ENCODE measurements at regions of chr1 and their contacts with region 1.

Region 1: GRCh38 chr1:205449750-205450443 is 5.9 kb downstream of the BLACAT1 start:
- DNase-seq: peak; percentile 89 to 97 (median 95)
- ATAC-seq: peak; percentile 87
- H3K4me3 ChIP-seq: peak overlapping the region; percentile 38
- H3K27ac ChIP-seq: peak overlapping the region; percentile 61
- H3K4me1 ChIP-seq: peaks cover 37 to 39% of the 10 kb centered on the region in 2 experiments; a peak in 4 of 5 replicates
- H3K27me3 ChIP-seq: peaks cover 3 to 17% of the 10 kb centered on the region in 2 experiments; a peak in 4 of 5 replicates
- CTCF ChIP-seq: no peak; a peak in 1 of 6 replicates
- EP300 ChIP-seq: no peak
- POLR2A ChIP-seq: peak; percentile 55
- RAD21 ChIP-seq: no peak

Region 2: DNA sequence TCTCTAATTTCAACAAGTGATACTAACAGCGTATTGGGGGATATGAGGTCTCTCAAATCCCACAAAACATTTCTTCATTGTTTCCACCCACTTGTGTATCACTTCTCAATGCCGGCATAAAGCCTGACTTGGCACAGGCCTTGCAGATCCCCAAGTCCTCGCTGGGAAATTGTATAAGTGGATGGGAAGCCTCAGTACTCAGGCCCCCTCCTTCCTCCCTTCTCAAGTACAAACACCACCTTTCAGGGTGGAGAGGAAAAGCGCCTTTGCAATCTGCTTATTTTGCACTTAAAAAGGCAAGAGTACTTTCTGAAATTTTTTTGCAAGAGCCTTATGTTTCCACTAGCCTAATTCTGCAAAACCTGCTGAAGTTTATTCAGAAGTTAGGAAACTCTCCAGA is 67.3 kb before region 1 on chr1:
- CTCF ChIA-PET with region 1: interaction called, 10 read pairs
- POLR2A ChIA-PET with region 1: interaction called, 3 read pairs
- in situ Hi-C with region 1: no loop called
- intact Hi-C with region 1: no loop called
- DNase-seq: no peak
- ATAC-seq: no peak
- H3K4me3 ChIP-seq: no peak overlapping the region
- H3K27ac ChIP-seq: no peak overlapping the region
- H3K4me1 ChIP-seq: no peaks in the 10 kb centered on the region
- H3K27me3 ChIP-seq: peaks cover 45 to 64% of the 10 kb centered on the region in 2 experiments
- CTCF ChIP-seq: no peak
- EP300 ChIP-seq: no peak
- POLR2A ChIP-seq: no peak
- RAD21 ChIP-seq: no peak

Region 3: DNA sequence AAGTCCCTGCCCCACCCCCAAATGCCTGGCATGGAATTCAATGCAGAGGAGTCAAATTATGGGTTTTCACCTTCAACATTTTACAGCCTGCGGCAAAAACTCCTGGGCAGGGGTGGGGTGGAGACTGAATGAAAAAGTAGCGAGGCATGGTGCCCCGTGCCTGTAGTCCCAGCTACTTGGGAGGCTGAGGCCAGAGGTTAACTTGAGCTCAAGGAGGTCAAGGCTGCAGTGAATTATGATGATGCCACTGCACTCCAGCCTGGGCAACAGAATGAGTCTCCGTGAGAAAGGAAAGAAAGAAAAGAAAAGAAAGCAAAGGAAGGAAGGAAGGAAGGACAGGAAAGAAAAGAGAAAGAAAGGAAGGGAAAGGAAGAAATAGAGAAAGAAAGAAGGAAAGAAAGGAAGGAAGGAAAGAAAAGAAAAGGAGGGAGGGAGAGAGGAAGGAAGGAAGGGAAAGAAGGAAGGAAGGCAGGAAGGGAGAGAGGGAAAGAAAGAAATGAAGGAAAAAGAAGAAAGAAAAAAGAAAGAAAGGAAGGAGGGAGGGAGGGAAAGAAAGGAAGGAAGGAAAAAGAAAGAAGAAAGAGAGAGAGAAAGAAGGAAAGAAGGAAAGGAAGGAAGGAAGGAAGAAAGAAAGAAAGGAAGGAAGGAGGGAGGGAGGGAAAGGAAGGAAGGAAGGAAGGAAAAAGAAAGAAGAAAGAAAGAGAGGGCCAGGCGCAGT is 39.2 kb before region 1 on chr1:
- CTCF ChIA-PET with region 1: no interaction called
- POLR2A ChIA-PET with region 1: no interaction called
- in situ Hi-C with region 1: no loop called
- intact Hi-C with region 1: no loop called
- DNase-seq: no peak
- ATAC-seq: no peak
- H3K4me3 ChIP-seq: no peak overlapping the region
- H3K27ac ChIP-seq: no peak overlapping the region
- H3K4me1 ChIP-seq: peaks cover 0 to 3% of the 10 kb centered on the region in 2 experiments; a peak in 1 of 5 replicates
- H3K27me3 ChIP-seq: peaks cover 7 to 23% of the 10 kb centered on the region in 2 experiments; a peak in 4 of 5 replicates
- CTCF ChIP-seq: no peak
- EP300 ChIP-seq: no peak
- POLR2A ChIP-seq: no peak
- RAD21 ChIP-seq: no peak

Region 4: DNA sequence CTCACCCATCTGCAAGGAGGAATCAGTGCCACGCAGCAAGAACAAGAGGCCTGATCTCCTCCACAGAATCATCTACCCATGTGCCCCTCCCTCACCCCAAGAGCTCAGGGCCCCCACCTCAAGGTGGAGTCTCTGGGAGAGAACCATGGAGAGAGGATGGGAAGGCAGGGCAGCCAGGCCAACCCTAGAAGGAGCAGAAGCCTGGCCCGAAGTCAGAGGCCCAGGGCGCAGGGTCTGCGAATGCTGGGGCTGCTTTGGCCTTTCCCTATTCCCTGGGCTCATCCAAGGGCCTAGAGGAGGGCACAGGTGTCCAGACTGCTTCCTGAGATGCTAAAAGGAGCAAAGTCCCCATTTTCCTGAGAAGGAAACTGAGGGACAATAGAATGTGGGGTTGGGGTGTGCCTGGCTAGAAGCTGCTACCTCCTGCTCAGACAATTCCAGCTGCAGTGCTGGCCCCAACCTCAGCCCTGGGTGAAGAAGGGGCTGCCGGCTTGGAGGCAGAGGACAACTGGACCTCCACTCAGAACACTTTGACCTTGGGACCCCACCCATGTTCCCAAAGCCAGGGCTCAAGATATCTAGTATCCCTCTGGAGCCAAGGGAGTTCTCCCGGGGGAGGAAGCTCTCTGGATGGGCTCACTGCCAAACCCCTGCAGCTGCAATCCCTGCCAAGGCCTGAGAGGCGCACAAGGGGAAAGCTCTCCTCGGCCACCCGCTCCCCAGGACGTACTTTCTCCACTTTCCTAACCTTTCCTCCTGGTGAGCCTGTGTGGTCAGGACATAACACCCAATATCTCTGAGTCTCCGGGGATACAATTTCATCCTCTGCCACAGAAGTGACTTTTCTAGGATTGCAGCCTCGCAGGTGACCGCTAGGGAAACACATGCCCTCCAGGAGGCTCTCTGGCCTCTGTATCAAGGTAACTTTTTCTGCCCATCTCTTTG is 11.4 kb before region 1 on chr1:
- CTCF ChIA-PET with region 1: no interaction called
- POLR2A ChIA-PET with region 1: interaction called, 11 read pairs
- in situ Hi-C with region 1: no loop called
- intact Hi-C with region 1: no loop called
- DNase-seq: peak; percentile 75 to 85 (median 79)
- ATAC-seq: peak; percentile 87
- H3K4me3 ChIP-seq: no peak overlapping the region
- H3K27ac ChIP-seq: no peak overlapping the region
- H3K4me1 ChIP-seq: peaks cover 10 to 15% of the 10 kb centered on the region in 2 experiments
- H3K27me3 ChIP-seq: peaks cover 11 to 25% of the 10 kb centered on the region in 2 experiments; a peak in 3 of 5 replicates
- CTCF ChIP-seq: peak; percentile 68 to 81 (median 79)
- EP300 ChIP-seq: no peak
- POLR2A ChIP-seq: no peak
- RAD21 ChIP-seq: peak in 1 of 2 experiments; percentile 47; a peak in 2 of 4 replicates